A673 (cell line): ENCODE measurements at regions of chr1 and their contacts with region 1.

Region 1: GRCh38 chr1:206583707-206584648 is 28.3 kb downstream of the EIF2D start:
- DNase-seq: peak; percentile 76
- H3K4me3 ChIP-seq: no peak overlapping the region
- H3K27ac ChIP-seq: no peak overlapping the region
- H3K4me1 ChIP-seq: no peaks in the 10 kb centered on the region
- H3K27me3 ChIP-seq: no peaks in the 10 kb centered on the region
- CTCF ChIP-seq: peak; percentile 97

Region 2: DNA sequence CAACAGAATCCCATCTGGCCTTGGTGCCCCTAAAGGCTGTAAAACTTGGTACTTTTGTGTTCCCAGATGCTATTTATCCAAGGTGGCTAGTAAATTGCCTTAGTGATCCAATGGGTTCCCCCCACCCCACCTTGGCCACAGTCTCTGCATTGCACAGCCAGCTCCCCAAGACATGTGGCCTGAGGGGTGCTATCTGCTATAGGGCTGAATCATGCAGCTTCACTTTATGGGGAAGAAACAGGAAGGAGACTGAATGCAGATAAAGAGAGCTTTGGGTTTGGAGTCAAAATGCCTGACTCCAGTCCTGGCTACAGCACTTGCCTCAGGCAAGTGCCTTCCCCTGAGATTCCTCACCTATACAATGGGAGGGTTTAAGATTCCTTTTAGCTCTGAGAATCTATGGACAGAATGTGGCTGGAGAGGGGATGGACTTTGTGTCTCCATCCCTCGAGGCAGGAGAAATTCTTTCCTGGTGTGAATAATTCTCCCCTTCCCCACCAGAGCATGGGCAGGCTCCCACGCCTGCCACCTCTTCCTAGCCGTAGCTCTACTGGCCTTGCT is 524.5 kb before region 1 on chr1:
- CTCF ChIA-PET with region 1: no interaction called
- POLR2A ChIA-PET with region 1: no interaction called
- intact Hi-C with region 1: no loop called
- DNase-seq: no peak
- H3K4me3 ChIP-seq: no peak overlapping the region
- H3K27ac ChIP-seq: no peak overlapping the region
- H3K4me1 ChIP-seq: no peaks in the 10 kb centered on the region
- H3K27me3 ChIP-seq: no peaks in the 10 kb centered on the region
- CTCF ChIP-seq: no peak

Region 3: GRCh38 chr1:206489980-206490770 is 93.8 kb before region 1 on chr1:
- CTCF ChIA-PET with region 1: interaction called, 25 read pairs
- POLR2A ChIA-PET with region 1: no interaction called
- intact Hi-C with region 1: loop called (anchors 1 kb)
- DNase-seq: peak; percentile 76
- H3K4me3 ChIP-seq: no peak overlapping the region
- H3K27ac ChIP-seq: no peak overlapping the region
- H3K4me1 ChIP-seq: no peaks in the 10 kb centered on the region
- H3K27me3 ChIP-seq: no peaks in the 10 kb centered on the region
- CTCF ChIP-seq: peak; percentile 97

Region 4: DNA sequence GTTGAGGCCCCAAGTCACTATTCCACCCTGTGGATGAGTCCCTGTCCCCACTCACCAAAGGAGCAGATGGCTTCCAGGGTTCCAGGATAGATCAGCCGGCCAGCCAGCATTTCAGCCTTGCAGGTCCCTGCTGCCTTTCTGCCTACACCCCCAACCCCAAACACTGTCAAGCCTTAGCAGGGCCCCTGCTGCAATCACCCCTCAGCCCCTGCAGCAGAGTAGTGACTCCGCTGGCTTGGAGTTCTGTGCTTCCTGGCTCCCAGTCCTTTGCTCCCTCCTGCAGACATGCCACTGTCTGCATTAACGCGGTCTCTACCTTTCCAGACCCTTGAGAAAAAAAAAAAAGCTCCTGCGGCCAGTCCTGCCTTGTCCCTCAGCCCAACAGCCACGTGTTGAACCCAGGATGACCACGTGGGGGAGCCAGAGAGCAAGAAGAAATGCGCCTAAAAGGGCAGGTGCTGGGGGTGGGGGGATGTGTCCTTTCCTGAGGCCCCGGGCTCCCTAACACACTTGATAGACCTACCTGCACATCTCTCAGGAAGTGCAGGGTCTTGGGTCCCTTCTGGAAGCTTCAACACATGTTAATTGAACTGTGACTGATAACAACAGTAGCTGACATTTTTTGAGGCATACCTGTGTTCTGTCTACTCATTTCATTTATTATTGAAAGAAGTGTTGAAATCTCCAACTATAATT is 39.3 kb before region 1 on chr1:
- CTCF ChIA-PET with region 1: interaction called, 8 read pairs
- POLR2A ChIA-PET with region 1: no interaction called
- intact Hi-C with region 1: loop called (anchors 2 kb)
- DNase-seq: peak; percentile 71
- H3K4me3 ChIP-seq: no peak overlapping the region
- H3K27ac ChIP-seq: no peak overlapping the region
- H3K4me1 ChIP-seq: no peaks in the 10 kb centered on the region
- H3K27me3 ChIP-seq: no peaks in the 10 kb centered on the region
- CTCF ChIP-seq: peak; percentile 96

Region 5: GRCh38 chr1:207004981-207005830 is 421.2 kb after region 1 on chr1:
- CTCF ChIA-PET with region 1: no interaction called
- POLR2A ChIA-PET with region 1: no interaction called
- intact Hi-C with region 1: no loop called
- DNase-seq: peak; percentile 72
- H3K4me3 ChIP-seq: no peak overlapping the region
- H3K27ac ChIP-seq: no peak overlapping the region
- H3K4me1 ChIP-seq: no peaks in the 10 kb centered on the region
- H3K27me3 ChIP-seq: peaks cover under 1% of the 10 kb centered on the region
- CTCF ChIP-seq: peak; percentile 86